Caco-2 (cell line): ENCODE measurements at regions of chr1 and their contacts with region 1.

Region 1: GRCh38 chr1:39115271-39116110 is 89.0 kb upstream of the MACF1 start:
- DNase-seq: no peak
- H3K4me3 ChIP-seq: no peak overlapping the region
- H3K4me3 Mint-ChIP-seq: no peak overlapping the region
- H3K27ac Mint-ChIP-seq: no peak overlapping the region
- H3K4me1 ChIP-seq: peaks cover 37% of the 10 kb centered on the region
- H3K4me1 Mint-ChIP-seq: peaks cover 7% of the 10 kb centered on the region
- H3K27me3 ChIP-seq: no peaks in the 10 kb centered on the region
- H3K27me3 Mint-ChIP-seq: no peaks in the 10 kb centered on the region
- CTCF ChIP-seq: no peak

Region 2: DNA sequence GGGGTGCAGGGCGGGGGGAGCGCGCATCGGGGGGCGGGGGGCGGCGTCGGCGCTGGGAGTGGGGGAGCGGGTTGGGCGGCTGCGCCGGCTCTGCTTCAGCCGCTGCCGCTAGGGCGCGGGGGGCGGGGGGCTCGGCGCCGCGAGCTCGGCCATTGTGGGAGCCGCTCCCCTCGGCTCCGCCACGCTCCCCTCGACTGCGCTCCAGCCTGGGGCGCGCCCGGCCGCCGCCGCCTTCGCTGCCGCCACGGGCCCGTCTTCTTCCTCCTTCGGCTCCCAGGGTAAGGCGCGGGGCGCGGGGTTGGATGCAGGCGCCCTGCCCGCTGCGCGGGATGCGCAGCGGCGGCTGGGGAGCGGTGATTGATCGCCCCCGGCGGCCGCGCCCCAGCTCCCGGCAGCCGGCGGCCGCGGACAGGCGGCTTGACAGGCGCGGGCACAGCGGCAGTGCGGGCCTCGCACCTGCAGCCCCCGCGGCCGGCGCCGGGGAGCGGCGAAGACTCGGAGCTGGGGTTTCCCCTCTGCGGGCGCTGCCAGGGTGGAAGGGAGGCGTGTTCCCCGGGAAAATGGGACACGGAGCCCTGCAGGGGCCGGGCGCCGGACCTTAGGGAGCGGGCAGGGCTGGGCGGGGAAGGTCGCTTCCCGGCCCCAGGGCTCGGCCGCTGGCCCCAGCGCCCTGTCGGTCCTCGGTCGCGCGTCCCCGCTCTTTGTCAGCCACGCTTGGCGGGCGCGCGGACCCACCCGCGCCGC is 34.1 kb before region 1 on chr1:
- CTCF ChIA-PET with region 1: no interaction called
- POLR2A ChIA-PET with region 1: no interaction called
- intact Hi-C with region 1: no loop called
- DNase-seq: peak in 1 of 2 experiments; percentile 30
- H3K4me3 ChIP-seq: peak overlapping the region; percentile 38
- H3K4me3 Mint-ChIP-seq: peak overlapping the region; percentile 70
- H3K27ac Mint-ChIP-seq: no peak overlapping the region
- H3K4me1 ChIP-seq: no peaks in the 10 kb centered on the region
- H3K4me1 Mint-ChIP-seq: no peaks in the 10 kb centered on the region
- H3K27me3 ChIP-seq: no peaks in the 10 kb centered on the region
- H3K27me3 Mint-ChIP-seq: peaks cover 7% of the 10 kb centered on the region
- CTCF ChIP-seq: no peak

Region 3: DNA sequence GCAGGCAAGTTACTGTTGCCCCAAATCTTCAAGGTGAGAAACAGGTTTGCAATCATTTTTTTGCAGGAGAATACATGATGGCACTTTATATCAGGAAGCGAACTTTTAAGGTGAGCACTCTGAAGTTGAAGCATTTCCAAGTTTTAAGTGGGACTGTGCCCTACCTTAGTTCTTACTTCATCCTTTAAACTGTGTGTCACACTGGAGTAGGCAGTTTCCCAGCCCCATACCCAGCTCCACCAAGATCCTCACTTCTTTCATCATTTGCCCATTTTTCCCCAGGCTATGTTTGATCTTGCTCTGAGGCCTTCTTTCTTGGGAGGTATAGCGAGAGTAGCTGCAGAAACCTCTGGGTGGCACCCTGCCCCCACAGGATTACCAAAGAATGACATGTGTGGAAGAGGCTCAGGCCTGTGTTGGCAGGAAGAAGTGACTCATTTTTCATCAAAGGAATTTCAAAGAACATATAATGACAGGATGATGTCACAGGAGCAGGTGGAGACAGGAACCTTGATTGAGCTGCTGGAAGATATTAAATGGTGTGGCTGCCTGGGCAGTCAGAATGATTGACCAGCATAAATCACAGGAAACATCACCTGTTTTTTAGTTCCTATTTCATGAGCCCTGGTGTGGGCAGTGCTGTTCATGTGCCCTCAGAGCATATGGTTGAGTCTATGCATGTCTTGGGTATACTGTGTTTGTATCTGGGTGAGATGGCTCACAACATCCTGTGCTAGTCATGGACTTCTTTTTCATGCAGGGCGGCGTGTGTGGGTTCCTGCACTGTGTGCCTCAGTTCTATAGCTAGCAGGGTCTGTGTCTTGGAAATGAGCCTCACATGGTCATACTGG is 68.2 kb after region 1 on chr1:
- CTCF ChIA-PET with region 1: no interaction called
- POLR2A ChIA-PET with region 1: interaction called, 10 read pairs
- intact Hi-C with region 1: no loop called
- DNase-seq: peak; percentile 86
- H3K4me3 ChIP-seq: no peak overlapping the region
- H3K4me3 Mint-ChIP-seq: peak overlapping the region; percentile 30
- H3K27ac Mint-ChIP-seq: peak overlapping the region; percentile 86
- H3K4me1 ChIP-seq: peaks cover 29% of the 10 kb centered on the region
- H3K4me1 Mint-ChIP-seq: peaks cover 25% of the 10 kb centered on the region
- H3K27me3 ChIP-seq: no peaks in the 10 kb centered on the region
- H3K27me3 Mint-ChIP-seq: no peaks in the 10 kb centered on the region
- CTCF ChIP-seq: peak; percentile 41 to 48

Region 4: DNA sequence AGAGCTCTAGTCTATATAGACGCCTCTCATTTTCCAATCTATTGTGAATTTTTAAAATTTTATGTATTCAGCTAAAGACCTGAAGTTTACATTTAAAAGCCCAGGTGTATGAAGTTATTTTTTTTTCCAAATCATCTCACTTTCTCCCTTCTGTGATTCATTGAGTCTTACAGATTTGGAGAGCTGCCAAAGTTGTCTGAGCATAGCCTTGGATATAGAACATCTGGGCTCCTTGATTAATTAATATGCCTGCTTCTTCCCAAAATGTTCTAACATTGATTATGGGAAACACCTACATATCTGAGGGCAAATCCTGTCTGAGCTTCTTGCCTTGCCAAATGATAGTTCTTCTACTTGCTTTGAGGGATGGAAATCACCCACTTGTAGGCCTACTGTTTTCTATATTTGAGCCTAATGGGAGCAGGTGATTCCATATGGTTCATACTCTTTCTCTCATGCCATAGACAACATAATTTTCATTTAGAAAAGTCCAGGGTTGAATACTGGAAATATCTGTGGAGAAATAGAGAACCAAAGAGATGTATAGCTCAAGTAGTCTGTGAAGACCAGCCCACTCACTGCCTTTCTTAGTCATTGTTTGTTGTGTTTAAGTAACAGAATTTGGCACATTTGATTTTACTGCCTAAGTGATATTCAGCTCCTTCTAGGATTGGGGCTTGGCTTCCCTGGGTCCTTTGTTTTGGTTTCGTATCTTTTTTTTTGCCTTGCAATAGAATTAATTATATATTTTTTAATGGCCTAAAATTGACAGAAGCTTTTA is 135.2 kb after region 1 on chr1:
- CTCF ChIA-PET with region 1: no interaction called
- POLR2A ChIA-PET with region 1: no interaction called
- intact Hi-C with region 1: no loop called
- DNase-seq: no peak
- H3K4me3 ChIP-seq: no peak overlapping the region
- H3K4me3 Mint-ChIP-seq: no peak overlapping the region
- H3K27ac Mint-ChIP-seq: no peak overlapping the region
- H3K4me1 ChIP-seq: no peaks in the 10 kb centered on the region
- H3K4me1 Mint-ChIP-seq: peaks cover 7% of the 10 kb centered on the region
- H3K27me3 ChIP-seq: no peaks in the 10 kb centered on the region
- H3K27me3 Mint-ChIP-seq: no peaks in the 10 kb centered on the region
- CTCF ChIP-seq: no peak